CD8-positive, alpha-beta T cell (primary cell): ENCODE measurements at regions of chr5 and their contacts with region 1.

Region 1: DNA sequence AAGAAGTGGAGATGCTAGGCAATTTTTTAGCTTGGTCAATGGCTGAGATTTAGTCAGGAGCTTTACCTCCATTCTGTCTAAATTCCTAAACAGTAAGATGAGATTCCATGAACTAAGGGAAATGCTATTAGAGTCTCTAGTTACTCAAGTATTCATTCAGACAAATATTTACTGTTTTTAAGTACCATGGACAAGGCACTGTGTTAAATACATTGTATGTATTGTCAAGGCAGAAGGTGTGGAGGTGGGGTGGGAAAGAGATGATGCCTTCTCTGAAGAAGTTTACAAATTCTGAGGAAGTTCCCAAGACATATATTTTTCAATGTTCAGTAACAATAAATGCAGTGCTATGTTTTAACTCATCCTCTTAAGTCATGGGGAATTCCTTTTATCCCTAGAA is 459.9 kb upstream of the NMUR2 start:
- DNase-seq: no peak
- ATAC-seq: no peak
- H3K4me3 ChIP-seq: no peak overlapping the region
- H3K4me3 Mint-ChIP-seq: no peak overlapping the region
- H3K27ac ChIP-seq: no peak overlapping the region
- H3K27ac Mint-ChIP-seq: no peak overlapping the region
- H3K4me1 ChIP-seq: no peaks in the 10 kb centered on the region
- H3K4me1 Mint-ChIP-seq: no peaks in the 10 kb centered on the region
- H3K27me3 ChIP-seq: no peaks in the 10 kb centered on the region
- H3K27me3 Mint-ChIP-seq: no peaks in the 10 kb centered on the region
- CTCF ChIP-seq: no peak

Region 2: GRCh38 chr5:152838241-152838786 is 26.7 kb before region 1 on chr5:
- CTCF ChIA-PET with region 1: no interaction called
- POLR2A ChIA-PET with region 1: no interaction called
- intact Hi-C with region 1: loop called in 1 of 2 experiments (anchors 1 kb)
- DNase-seq: no peak
- ATAC-seq: no peak
- H3K4me3 ChIP-seq: no peak overlapping the region
- H3K4me3 Mint-ChIP-seq: no peak overlapping the region
- H3K27ac ChIP-seq: no peak overlapping the region
- H3K27ac Mint-ChIP-seq: no peak overlapping the region
- H3K4me1 ChIP-seq: no peaks in the 10 kb centered on the region
- H3K4me1 Mint-ChIP-seq: no peaks in the 10 kb centered on the region
- H3K27me3 ChIP-seq: no peaks in the 10 kb centered on the region
- H3K27me3 Mint-ChIP-seq: no peaks in the 10 kb centered on the region
- CTCF ChIP-seq: no peak